HEK293 (cell line): ENCODE measurements at regions of chr17 and their contacts with region 1.

Region 1: GRCh38 chr17:49763735-49764558 is at the start of gene FAM117A:
- H3K4me3 ChIP-seq: peak within 1 kb of the TSS; percentile 73
- H3K27ac ChIP-seq: no peak within 1 kb of the TSS
- H3K4me1 ChIP-seq: peaks cover 9% of the 10 kb centered on the region; the same call in 1 of the 2 replicates
- CTCF ChIP-seq: no peak

Region 2: DNA sequence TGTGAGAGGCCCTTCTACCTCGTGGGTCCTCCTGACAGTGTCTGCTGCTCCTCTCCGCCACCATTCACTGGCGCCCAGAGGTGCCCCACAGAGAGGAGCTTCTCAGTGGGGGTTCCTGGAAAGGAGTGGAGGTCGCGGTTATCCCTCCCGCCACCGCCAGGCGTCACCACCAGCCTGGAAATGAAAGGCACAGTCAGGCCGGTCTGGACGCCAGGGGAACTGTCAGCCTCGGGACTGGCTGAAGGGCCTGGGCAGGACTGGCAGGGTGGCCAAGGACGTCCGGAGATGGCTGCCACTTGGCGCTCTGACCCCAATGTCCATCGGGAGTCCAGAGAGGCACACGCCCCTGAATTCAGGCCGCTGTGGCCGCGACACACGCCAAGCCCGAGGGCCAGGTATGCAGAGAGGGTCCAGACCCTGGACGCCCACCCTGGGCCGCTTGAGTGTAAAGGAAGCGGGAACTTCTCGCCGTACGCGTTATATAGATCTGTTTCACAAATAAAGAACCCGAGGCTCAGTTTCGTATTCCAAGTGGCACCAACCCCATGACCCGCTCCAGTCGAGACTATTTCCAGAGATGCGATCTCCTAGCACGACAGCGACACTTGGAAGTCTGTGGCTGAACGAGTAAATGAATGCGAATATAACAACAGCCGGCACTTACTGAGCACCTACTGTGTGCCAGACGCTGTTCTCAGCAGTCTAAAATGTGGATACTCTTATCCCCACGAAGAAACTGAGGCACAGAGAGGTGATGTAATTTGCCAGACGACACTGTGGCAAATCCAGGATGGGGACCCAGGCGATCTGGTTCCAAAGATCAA is 195.9 kb before region 1 on chr17:
- CTCF ChIA-PET with region 1: interaction called, 4 read pairs
- POLR2A ChIA-PET with region 1: interaction called, 11 read pairs
- H3K4me3 ChIP-seq: no peak overlapping the region
- H3K27ac ChIP-seq: no peak overlapping the region
- H3K4me1 ChIP-seq: peaks cover 3% of the 10 kb centered on the region
- CTCF ChIP-seq: peak; percentile 97

Region 3: GRCh38 chr17:49677933-49678847 is 85.8 kb before region 1 on chr17 and contains the start of gene SPOP:
- CTCF ChIA-PET with region 1: no interaction called
- POLR2A ChIA-PET with region 1: interaction called, 17 read pairs
- H3K4me3 ChIP-seq: peak within 1 kb of the TSS; percentile 78
- H3K27ac ChIP-seq: peak within 1 kb of the TSS; percentile 70
- H3K4me1 ChIP-seq: peaks cover 15% of the 10 kb centered on the region; the same call in 1 of the 2 replicates
- CTCF ChIP-seq: no peak

Region 4: GRCh38 chr17:49715717-49716279 is 48.1 kb before region 1 on chr17:
- CTCF ChIA-PET with region 1: interaction called, 5 read pairs
- POLR2A ChIA-PET with region 1: interaction called, 67 read pairs
- H3K4me3 ChIP-seq: no peak overlapping the region
- H3K27ac ChIP-seq: no peak overlapping the region
- H3K4me1 ChIP-seq: no peaks in the 10 kb centered on the region
- CTCF ChIP-seq: no peak

Region 5: GRCh38 chr17:49779739-49780231 is 15.8 kb after region 1 on chr17:
- CTCF ChIA-PET with region 1: interaction called, 4 read pairs
- POLR2A ChIA-PET with region 1: interaction called, 68 read pairs
- H3K4me3 ChIP-seq: no peak overlapping the region
- H3K27ac ChIP-seq: no peak overlapping the region
- H3K4me1 ChIP-seq: no peaks in the 10 kb centered on the region
- CTCF ChIP-seq: peak; percentile 67

Region 6: GRCh38 chr17:49798182-49798581 is 34.2 kb after region 1 on chr17:
- CTCF ChIA-PET with region 1: no interaction called
- POLR2A ChIA-PET with region 1: interaction called, 12 read pairs
- H3K4me3 ChIP-seq: no peak overlapping the region
- H3K27ac ChIP-seq: no peak overlapping the region
- H3K4me1 ChIP-seq: no peaks in the 10 kb centered on the region
- CTCF ChIP-seq: no peak